ENCODE measurements at regions of chr7 and their contacts with region 1.

Region 1: GRCh38 chr7:37495574-37496184 is 47.0 kb upstream of the ELMO1 start:
- H3K4me3 ChIP-seq: no peak overlapping the region
- H3K27ac ChIP-seq: no peak overlapping the region
- H3K4me1 ChIP-seq: no peaks in the 10 kb centered on the region
- CTCF ChIP-seq: no peak

Region 2: GRCh38 chr7:37284805-37285231 is 210.9 kb before region 1 on chr7:
- CTCF ChIA-PET with region 1: interaction called, 16 read pairs
- POLR2A ChIA-PET with region 1: no interaction called
- H3K4me3 ChIP-seq: no peak overlapping the region
- H3K27ac ChIP-seq: no peak overlapping the region
- H3K4me1 ChIP-seq: peaks cover 6% of the 10 kb centered on the region
- CTCF ChIP-seq: no peak

Region 3: DNA sequence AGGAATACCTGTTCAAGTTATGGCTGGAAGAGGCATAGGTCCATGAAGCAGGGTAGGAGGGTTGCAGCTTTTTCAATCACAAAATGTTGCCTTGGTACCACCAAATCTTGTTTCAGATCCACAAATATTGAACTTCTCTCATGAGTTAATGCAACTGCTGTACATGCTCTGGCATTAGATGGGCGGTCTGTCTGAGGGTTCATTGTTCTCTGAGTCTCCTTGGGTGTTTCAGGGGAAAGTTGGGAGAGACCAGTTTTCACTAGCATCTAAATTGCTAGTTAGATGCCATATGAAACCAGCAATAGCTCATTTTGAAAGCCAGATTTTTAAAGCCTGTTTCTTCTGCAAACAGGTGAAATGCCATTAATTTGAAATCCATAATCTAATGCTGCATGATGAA is 19.3 kb before region 1 on chr7:
- CTCF ChIA-PET with region 1: interaction called, 13 read pairs
- POLR2A ChIA-PET with region 1: no interaction called
- H3K4me3 ChIP-seq: no peak overlapping the region
- H3K27ac ChIP-seq: no peak overlapping the region
- H3K4me1 ChIP-seq: no peaks in the 10 kb centered on the region
- CTCF ChIP-seq: no peak

Region 4: DNA sequence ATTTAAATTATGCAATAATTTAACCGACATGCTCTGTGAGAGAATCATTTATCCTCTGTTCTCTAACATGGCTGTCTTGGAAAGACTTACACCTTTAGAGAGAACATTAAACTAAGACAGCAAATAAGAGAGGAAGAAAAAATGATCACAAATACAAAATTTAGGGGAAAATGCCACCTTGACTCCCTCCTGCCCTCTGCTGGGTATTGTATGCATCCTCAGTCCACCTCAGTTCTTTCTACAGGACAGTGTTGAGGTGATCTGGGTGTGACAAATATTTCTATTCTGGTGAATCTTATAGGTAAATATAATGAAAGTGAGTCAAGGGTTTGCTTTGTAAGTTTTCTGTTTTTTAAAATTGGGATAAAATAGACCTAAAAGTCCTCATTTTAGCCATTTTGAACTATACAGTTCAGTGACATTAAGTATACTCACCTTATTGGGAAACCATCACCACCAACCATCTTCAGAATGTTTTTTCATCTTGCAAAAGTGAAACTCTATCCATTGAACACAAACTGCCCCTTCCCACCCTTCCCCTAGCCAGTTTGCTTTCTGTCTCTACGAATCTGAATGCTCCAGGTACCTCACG is 14.5 kb after region 1 on chr7:
- CTCF ChIA-PET with region 1: interaction called, 57 read pairs
- POLR2A ChIA-PET with region 1: no interaction called
- H3K4me3 ChIP-seq: no peak overlapping the region
- H3K27ac ChIP-seq: no peak overlapping the region
- H3K4me1 ChIP-seq: no peaks in the 10 kb centered on the region
- CTCF ChIP-seq: no peak

Region 5: GRCh38 chr7:37786741-37787569 is 291.3 kb after region 1 on chr7:
- CTCF ChIA-PET with region 1: no interaction called
- POLR2A ChIA-PET with region 1: no interaction called
- H3K4me3 ChIP-seq: no peak overlapping the region
- H3K27ac ChIP-seq: no peak overlapping the region
- H3K4me1 ChIP-seq: no peaks in the 10 kb centered on the region
- CTCF ChIP-seq: no peak

Measured in HEK293 (cell line).